WTC11 (cell line): ENCODE measurements at regions of chr1 and their contacts with region 1.

Region 1: DNA sequence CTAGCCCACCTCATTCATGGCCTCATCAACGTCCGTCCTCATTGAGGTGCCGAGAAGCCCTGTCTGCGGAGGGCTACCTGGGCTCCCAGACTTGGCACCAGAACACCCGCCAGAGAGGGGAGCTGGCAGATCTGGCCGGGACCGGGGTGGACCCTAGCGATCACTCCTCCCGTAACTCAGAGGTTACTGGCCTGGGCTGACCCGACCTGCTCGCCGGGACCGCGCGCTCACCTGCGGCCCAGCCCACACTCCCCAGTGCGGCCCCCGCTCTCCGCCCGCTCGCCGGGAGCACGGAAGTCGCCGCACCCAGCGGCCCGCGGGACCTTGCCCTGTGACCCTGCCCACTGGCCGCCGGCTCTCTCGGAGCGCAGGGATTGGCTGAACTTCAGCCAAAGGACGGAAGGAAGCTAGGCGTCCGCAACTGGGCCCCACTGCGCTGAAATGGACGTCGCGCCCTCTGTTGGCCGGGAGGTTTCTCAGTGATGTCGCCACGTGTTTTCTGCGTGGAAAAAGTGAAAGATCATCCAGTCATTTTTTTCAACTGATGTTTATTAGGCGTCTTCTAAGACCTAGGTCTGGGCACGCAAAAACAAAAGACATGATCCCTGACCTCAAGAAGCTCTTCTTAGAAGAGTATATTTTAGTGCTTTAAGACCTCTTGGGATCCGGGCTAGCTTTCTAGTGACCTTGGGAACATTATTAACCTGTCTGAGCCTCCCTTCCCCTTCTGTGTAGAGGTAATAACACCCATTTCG is at the start of gene SMIM12:
- DNase-seq: peak; percentile 90
- ATAC-seq: peak; percentile 99
- H3K4me3 Mint-ChIP-seq: peak within 1 kb of the TSS; percentile 98
- H3K27ac Mint-ChIP-seq: peak within 1 kb of the TSS; percentile 68; the same call in 1 of the 2 replicates
- H3K4me1 Mint-ChIP-seq: peaks cover 11% of the 10 kb centered on the region
- H3K27me3 Mint-ChIP-seq: peaks cover 25% of the 10 kb centered on the region
- CTCF ChIP-seq: peak; percentile 15; the same call in 1 of the 2 replicates
- total RNA-seq, gene SMIM12: 34.6 to 41.9 TPM (median 39.6 TPM) in 3 replicates

Region 2: DNA sequence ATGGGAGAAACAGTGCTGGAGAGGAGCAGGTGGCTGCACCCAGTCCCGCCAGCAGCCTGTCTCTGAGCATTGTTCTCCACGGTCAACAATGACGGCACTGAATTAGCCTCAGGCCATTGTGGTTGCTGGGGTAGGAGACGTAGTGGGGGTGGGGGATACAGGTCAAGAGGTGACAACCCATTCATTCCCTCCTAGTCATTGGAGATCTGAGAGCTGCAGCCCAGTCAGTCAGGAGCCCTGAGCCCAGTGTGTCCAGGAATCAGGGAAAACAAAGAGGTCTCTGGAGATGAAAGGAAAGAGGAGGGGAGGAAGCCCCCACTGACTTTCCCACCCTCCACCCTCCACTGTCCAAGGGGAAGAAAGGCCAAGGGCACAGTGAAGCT is 15.4 kb before region 1 on chr1:
- CTCF ChIA-PET with region 1: interaction called, 27 read pairs
- POLR2A ChIA-PET with region 1: no interaction called
- DNase-seq: peak; percentile 28
- ATAC-seq: peak; percentile 50
- H3K4me3 Mint-ChIP-seq: no peak overlapping the region
- H3K27ac Mint-ChIP-seq: no peak overlapping the region; the same call in 1 of the 2 replicates
- H3K4me1 Mint-ChIP-seq: peaks cover 38% of the 10 kb centered on the region
- H3K27me3 Mint-ChIP-seq: no peaks in the 10 kb centered on the region
- CTCF ChIP-seq: no peak

Region 3: DNA sequence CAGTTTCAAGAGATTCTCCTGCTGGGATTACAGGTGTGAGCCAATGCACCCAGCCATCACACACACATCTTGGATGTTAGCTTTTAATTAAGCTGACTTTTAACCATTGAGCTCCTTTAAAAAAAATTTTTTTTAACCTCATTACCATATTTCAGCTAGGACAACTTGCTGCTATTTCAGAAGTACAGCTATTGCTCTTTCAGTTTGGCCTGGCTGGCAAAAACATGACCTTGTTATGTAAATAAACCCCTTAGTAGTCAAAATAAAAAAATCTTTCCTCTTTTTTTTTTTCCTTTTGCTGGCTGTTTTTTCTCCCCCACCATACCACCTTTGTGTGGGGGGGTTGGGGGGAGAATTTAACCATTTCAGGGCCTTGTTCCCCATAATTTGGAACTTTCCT is 269.5 kb after region 1 on chr1:
- CTCF ChIA-PET with region 1: no interaction called
- POLR2A ChIA-PET with region 1: no interaction called
- DNase-seq: no peak
- ATAC-seq: no peak
- H3K4me3 Mint-ChIP-seq: no peak overlapping the region
- H3K27ac Mint-ChIP-seq: no peak overlapping the region
- H3K4me1 Mint-ChIP-seq: no peaks in the 10 kb centered on the region
- H3K27me3 Mint-ChIP-seq: no peaks in the 10 kb centered on the region; the same call in 1 of the 2 replicates
- CTCF ChIP-seq: no peak